ENCODE measurements at regions of chr11 and their contacts with region 1.

Region 1: DNA sequence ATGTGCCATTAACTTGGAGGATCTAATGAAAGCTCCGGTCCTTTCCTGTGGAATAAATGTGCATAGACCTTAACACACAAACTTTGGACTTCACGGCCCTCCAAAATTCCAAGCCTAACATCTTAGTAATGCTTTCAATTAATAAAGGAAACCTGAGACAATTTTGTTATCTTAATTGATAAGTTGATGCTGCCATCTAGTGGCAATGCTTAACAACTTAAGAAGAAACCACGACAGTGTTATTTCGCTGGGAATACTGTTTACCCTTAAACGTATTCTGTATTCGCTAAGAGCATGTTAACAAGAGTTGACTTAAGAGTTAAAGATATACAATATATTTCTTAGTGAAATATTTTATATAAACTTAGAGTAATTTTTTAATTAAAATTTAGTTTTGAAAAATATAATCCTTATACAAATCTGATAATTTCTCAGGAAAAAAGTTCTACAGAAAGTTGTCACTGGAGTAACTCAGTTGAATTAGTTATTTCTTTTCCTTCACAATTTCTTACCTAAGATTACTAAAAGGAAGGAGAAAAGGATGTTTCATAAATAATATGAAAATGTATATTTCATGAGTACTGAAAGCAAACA is 35.0 kb upstream of the OR9G4 start:
- DNase-seq: no peak
- ATAC-seq: no peak
- H3K4me3 Mint-ChIP-seq: no peak overlapping the region
- H3K27ac Mint-ChIP-seq: no peak overlapping the region
- H3K4me1 Mint-ChIP-seq: no peaks in the 10 kb centered on the region
- H3K27me3 Mint-ChIP-seq: peaks cover 4% of the 10 kb centered on the region

Region 2: DNA sequence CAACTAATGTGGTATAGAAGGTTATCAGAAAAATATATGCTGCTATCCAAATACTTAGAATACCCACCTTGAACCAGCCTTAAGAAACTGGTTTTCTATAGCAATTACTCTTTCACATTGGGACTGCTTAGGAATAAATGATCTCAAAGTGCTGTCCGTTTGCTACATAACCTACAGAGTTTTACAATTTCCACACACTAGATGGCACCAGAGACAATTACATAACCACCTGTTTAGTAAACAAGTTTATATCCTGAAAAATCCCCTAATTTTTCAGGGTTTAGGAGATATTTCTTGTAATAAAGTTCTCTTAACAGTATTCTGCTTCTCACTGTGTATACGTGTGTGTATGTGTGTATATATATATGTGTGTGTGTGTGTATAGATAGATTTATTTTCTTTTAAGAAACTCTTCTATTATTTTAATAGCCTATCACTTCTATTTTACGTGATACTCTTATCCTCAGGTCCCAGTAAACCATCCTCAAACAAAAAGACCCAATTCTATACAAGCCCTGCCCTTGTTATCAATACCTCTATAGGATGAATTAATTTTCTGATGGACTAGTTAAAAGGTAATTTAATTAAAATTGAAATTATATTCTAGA is 840.7 kb before region 1 on chr11:
- CTCF ChIA-PET with region 1: no interaction called
- POLR2A ChIA-PET with region 1: no interaction called
- intact Hi-C with region 1: loop called (anchors 1 to 2 kb)
- DNase-seq: no peak
- ATAC-seq: no peak
- H3K4me3 Mint-ChIP-seq: no peak overlapping the region
- H3K27ac Mint-ChIP-seq: no peak overlapping the region
- H3K4me1 Mint-ChIP-seq: no peaks in the 10 kb centered on the region
- H3K27me3 Mint-ChIP-seq: no peaks in the 10 kb centered on the region

Region 3: DNA sequence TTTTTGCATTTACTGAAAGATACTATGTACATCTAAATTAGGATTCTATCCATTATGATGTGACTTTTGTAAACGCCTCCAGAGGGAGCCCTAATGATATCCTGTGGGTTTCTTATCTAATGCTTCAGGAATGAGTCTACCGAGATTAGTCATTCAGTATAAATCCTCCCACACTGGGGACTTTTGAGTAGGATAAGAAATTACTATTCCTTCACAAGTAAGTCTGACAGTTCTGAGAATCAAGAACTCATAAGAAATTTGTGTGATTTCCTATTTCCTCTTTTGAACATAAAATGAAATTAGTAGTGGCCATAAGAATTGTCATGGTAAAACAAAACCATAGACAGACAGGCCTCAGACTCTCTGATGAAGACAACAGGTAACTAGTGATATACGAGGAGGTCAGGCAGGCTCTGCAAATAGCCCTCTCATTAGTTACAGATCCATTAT is 158.9 kb before region 1 on chr11:
- CTCF ChIA-PET with region 1: interaction called, 4 read pairs
- POLR2A ChIA-PET with region 1: no interaction called
- intact Hi-C with region 1: loop called (anchors 2 to 10 kb)
- DNase-seq: no peak
- ATAC-seq: peak; percentile 61
- H3K4me3 Mint-ChIP-seq: no peak overlapping the region
- H3K27ac Mint-ChIP-seq: no peak overlapping the region
- H3K4me1 Mint-ChIP-seq: no peaks in the 10 kb centered on the region
- H3K27me3 Mint-ChIP-seq: no peaks in the 10 kb centered on the region

Measured in activated CD4-positive, alpha-beta T cell treated with anti-CD3 and anti-CD28 coated beads for 36 hours (primary cell).